Posterior vena cava (tissue), 2 donors: ENCODE measurements at regions of chr1 and their contacts with region 1.

Region 1: GRCh38 chr1:100459358-100460114 is 78.4 kb upstream of the GPR88 start:
- DNase-seq: peak; percentile 90

Region 2: GRCh38 chr1:99808391-99809115 is 651.0 kb before region 1 on chr1:
- intact Hi-C with region 1: loop called (anchors 10 kb)
- DNase-seq: no peak

Region 3: DNA sequence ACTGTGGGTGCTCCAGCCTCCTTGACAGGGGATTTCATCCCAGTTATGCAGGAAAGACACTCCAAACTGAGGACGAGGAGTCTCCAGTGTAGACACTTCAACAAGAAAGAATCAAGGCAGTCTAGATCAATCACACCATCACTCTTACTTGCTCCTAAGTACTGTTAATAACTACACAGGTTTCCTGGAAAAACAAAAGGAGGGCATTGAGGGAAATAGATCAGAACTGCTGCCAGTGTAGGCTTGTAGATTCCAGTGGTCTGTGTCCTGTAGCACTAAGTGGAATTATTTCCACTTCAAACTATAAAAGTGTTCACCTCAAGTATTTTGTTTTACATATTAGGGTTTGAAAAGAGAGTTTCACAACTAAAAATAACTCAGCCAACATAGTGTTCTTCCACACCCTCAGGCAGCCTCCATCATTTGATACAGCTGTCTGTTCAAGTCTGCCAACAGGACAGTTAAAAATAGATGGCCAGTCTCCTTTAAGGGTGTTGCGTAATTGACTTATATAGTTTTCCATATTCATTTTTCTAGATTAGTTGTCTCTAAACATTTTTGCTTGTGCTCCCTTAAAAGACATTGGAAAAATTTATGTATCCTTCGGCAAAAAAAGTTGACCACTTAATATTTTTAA is 641.4 kb before region 1 on chr1:
- intact Hi-C with region 1: loop called in 1 of 2 experiments (anchors 10 kb)
- DNase-seq: no peak

Region 4: DNA sequence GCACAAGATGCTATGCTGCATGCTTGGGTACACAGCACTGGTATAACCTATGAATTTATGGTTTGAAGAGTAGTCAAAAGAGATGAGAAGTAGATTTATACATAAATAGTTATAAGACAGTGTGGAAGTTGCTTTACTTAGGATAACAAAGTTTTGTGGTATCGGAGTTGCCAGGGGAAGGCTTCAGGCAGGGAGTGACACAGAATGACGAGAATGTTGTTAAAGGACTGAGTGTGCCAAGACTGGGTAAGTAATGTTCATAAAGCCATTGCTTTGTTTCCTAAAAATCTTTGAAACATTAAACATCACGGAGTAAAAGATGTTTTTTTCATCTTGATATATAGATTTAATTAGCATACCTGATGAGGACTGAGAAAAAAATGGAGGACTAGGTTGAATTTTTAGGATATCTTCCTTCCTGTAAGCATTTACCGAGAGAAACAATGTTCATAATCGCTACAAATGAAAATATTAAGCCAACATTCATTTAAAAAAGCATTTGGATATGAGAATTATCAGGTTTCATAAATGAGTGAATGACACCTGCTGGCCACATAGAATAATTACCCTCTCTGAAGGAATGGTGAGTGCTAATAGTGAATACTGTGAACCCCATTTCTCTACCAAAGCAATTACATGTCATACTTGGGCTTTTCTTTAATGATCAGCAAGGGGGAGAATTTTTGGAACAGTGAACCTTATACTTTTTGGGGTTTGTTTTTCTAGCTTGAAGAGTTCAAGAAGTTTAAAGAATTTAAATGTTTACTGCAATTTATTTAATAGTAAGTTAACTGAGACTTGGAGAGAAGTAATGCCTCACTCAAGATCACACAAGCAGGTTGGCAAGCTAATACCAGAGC is 406.7 kb after region 1 on chr1:
- intact Hi-C with region 1: loop called (anchors 5 to 10 kb)
- DNase-seq: no peak